T-cell (primary cell): ENCODE measurements at regions of chr2 and their contacts with region 1.

Region 1: DNA sequence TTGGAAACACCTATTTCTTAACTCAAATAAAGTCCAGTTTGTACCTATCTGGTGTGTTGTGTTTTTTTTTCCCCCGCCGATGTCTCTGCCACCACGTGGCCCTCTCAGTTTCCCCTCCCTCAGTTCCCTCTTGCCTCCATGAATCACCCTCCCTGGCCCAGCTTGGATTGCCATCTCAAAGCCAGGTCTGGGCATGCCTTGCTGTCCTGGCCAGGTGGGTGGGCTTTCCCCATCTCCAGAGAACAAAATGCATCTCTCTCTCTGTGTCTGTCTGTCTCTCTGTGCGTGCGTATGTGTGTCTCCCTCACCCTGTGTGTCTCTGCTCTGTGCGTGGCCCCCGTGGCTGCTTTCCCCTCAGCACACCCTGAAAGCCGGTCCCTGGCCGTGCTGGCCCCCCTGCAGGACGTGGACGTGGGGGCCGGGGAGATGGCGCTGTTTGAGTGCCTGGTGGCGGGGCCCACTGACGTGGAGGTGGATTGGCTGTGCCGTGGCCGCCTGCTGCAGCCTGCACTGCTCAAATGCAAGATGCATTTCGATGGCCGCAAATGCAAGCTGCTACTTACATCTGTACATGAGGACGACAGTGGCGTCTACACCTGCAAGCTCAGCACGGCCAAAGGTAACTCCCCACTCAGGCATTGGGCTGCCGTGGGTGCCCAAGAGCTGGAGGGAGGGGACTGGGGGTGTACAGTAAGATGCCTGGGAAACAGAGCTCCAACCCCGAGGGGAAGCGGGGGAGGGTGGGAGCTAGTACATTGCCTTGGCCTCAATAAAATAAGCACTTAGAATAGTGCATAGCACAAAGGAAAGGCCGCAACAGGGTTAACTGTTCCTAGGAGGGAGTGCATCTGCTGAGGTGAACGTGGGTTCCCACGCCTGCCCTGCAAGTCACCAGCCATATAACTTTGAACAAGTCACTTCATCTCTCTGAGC is 31.6 kb upstream of the GMPPA start:
- DNase-seq: no peak
- ATAC-seq: no peak
- H3K4me3 ChIP-seq: no peak overlapping the region
- H3K4me3 Mint-ChIP-seq: no peak overlapping the region
- H3K27ac ChIP-seq: no peak overlapping the region
- H3K27ac Mint-ChIP-seq: no peak overlapping the region
- H3K4me1 ChIP-seq: no peaks in the 10 kb centered on the region
- H3K4me1 Mint-ChIP-seq: no peaks in the 10 kb centered on the region
- H3K27me3 ChIP-seq: peaks cover 0 to 16% of the 10 kb centered on the region in 2 experiments
- H3K27me3 Mint-ChIP-seq: peaks cover 0 to 4% of the 10 kb centered on the region in 2 donors

Region 2: GRCh38 chr2:219484343-219485200 is 17.5 kb after region 1 on chr2:
- CTCF ChIA-PET with region 1: no interaction called
- POLR2A ChIA-PET with region 1: no interaction called
- DNase-seq: no peak
- ATAC-seq: peak; percentile 52 to 72 (median 58)
- H3K4me3 ChIP-seq: peak overlapping the region; percentile 24 to 29
- H3K4me3 Mint-ChIP-seq: peak overlapping the region; percentile 52 to 71 (median 58)
- H3K27ac ChIP-seq: no peak overlapping the region
- H3K27ac Mint-ChIP-seq: no peak overlapping the region
- H3K4me1 ChIP-seq: peaks cover 0 to 14% of the 10 kb centered on the region in 2 experiments
- H3K4me1 Mint-ChIP-seq: peaks cover 0 to 7% (median 7%) of the 10 kb centered on the region in 3 donors
- H3K27me3 ChIP-seq: peaks cover 10 to 85% of the 10 kb centered on the region in 2 experiments
- H3K27me3 Mint-ChIP-seq: peaks cover 24 to 56% of the 10 kb centered on the region in 2 donors

Region 3: DNA sequence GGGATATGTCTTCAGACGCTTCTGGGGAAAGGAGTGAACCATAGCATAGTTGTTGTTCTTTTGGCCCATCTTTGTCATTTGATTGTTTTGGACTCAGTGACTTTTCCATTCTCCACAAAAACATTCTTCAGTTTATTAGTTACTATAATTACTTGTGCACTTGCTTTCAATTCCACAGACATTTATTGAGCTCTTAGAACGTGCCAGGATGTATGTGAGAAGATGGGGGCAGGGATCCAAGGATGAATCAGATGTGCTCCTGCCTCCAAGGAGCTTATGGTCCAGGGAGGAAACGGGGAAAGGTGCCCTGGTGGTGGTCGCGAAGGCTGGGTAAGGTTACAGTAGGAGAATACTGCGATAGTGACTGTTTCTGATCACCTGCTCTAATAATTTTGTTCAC is 153.5 kb after region 1 on chr2:
- CTCF ChIA-PET with region 1: interaction called in 1 of 2 experiments, 10 read pairs
- POLR2A ChIA-PET with region 1: no interaction called
- DNase-seq: no peak
- ATAC-seq: no peak
- H3K4me3 ChIP-seq: no peak overlapping the region
- H3K4me3 Mint-ChIP-seq: no peak overlapping the region
- H3K27ac ChIP-seq: no peak overlapping the region
- H3K27ac Mint-ChIP-seq: no peak overlapping the region
- H3K4me1 ChIP-seq: no peaks in the 10 kb centered on the region
- H3K4me1 Mint-ChIP-seq: no peaks in the 10 kb centered on the region
- H3K27me3 ChIP-seq: peaks cover 0 to 4% of the 10 kb centered on the region in 2 experiments
- H3K27me3 Mint-ChIP-seq: peaks cover 3 to 15% of the 10 kb centered on the region in 2 donors